GM12878 (cell line): ENCODE measurements at regions of chr7 and their contacts with region 1.

Region 1: GRCh38 chr7:76272851-76273497 is 29.5 kb upstream of the HSPB1 start:
- DNase-seq: no peak
- ATAC-seq: peak; percentile 75
- H3K4me3 ChIP-seq: peak overlapping the region; percentile 61; the same call in 1 of the 2 replicates
- H3K27ac ChIP-seq: peak overlapping the region; percentile 56; the same call in 1 of the 2 replicates
- H3K4me1 ChIP-seq: peaks cover 17% of the 10 kb centered on the region
- H3K27me3 ChIP-seq: no peaks in the 10 kb centered on the region
- CTCF ChIP-seq: no peak
- EP300 ChIP-seq: no peak
- POLR2A ChIP-seq: no peak
- RAD21 ChIP-seq: no peak

Region 2: GRCh38 chr7:75624134-75624832 is 648.7 kb before region 1 on chr7:
- CTCF ChIA-PET with region 1: no interaction called
- POLR2A ChIA-PET with region 1: no interaction called
- RAD21 ChIA-PET with region 1: no interaction called
- SMC1A ChIA-PET with region 1: no interaction called
- in situ Hi-C with region 1: no loop called
- intact Hi-C with region 1: no loop called
- DNase-seq: no peak
- ATAC-seq: no peak
- H3K4me3 ChIP-seq: no peak overlapping the region
- H3K27ac ChIP-seq: no peak overlapping the region
- H3K4me1 ChIP-seq: peaks cover 8% of the 10 kb centered on the region
- H3K27me3 ChIP-seq: no peaks in the 10 kb centered on the region
- CTCF ChIP-seq: no peak
- EP300 ChIP-seq: no peak
- POLR2A ChIP-seq: no peak
- RAD21 ChIP-seq: no peak

Region 3: DNA sequence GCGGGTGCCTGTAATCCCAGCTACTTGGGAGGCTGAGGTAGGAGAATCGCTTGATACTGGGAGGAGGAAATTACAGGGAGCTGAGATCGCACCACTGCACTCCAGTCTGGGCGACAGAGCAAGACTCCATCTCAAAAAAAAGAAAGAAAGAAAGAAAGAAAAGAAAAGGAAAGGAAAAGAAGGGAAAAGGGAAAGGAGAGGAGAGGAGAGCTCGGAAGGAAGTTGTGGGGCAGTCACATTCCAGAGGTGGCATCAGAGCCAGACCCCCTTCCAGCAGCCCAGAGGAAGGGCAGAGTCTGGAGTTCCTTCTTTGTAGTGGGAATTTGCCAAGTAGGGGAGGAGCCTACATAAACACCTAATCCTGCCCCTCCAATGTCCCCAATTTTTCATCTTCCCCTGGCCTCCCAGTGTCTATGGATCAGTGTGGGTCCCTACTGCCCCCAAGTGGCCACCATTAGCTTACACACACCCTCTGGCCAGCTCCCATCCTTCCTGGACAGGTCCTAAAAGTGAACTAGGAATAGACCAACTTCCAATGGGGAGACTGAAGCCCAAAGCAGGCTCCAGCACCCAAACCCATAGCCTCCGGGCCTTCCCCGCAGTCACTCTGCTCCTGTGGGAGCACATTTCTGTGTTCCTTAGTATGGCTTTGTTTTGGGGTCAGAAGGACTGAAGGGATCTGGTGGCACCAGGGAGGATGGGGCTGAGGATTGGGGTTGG is 10.1 kb before region 1 on chr7:
- CTCF ChIA-PET with region 1: interaction called, 23 read pairs
- POLR2A ChIA-PET with region 1: interaction called, 5 read pairs
- RAD21 ChIA-PET with region 1: interaction called, 3 read pairs
- SMC1A ChIA-PET with region 1: interaction called, 5 read pairs
- in situ Hi-C with region 1: no loop called
- intact Hi-C with region 1: no loop called
- DNase-seq: no peak
- ATAC-seq: peak; percentile 85
- H3K4me3 ChIP-seq: no peak overlapping the region
- H3K27ac ChIP-seq: no peak overlapping the region
- H3K4me1 ChIP-seq: peaks cover 3% of the 10 kb centered on the region
- H3K27me3 ChIP-seq: no peaks in the 10 kb centered on the region; a peak in 1 of 4 replicates
- CTCF ChIP-seq: peak; percentile 76 to 79 (median 78)
- EP300 ChIP-seq: no peak
- POLR2A ChIP-seq: no peak
- RAD21 ChIP-seq: peak; percentile 73